Right ventricle myocardium inferior (tissue), 1 donor: ENCODE measurements at regions of chr2 and their contacts with region 1.

Region 1: GRCh38 chr2:85750587-85751575 is 2.9 kb upstream of the ATOH8 start:
- DNase-seq: no peak
- ATAC-seq: peak; percentile 59

Region 2: GRCh38 chr2:85772019-85772745 is 21.3 kb after region 1 on chr2:
- intact Hi-C with region 1: loop called (anchors 2 kb)
- DNase-seq: peak; percentile 98
- ATAC-seq: peak; percentile 92

Region 3: DNA sequence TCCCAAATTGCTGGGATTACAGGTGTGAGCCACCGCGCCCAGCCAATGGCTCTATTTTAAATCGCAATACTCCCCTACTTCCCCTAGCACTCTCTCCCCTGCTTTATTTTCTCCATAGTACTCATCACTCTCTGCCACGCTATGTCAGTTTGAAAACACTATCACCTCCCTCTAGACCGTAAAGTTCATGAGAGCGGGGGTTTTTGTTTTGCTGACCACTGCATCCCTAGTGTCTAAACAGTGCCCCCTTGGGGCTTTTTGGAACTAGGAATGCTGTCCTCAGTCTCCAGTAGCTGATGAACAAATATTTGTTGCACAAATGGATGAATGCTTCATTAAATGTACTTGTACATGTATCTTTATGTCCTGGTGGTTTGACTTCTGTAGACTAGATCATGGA is 47.0 kb after region 1 on chr2:
- intact Hi-C with region 1: loop called (anchors 1 kb)
- DNase-seq: no peak
- ATAC-seq: peak; percentile 34

Region 4: GRCh38 chr2:85873679-85874078 is 122.8 kb after region 1 on chr2:
- intact Hi-C with region 1: no loop called
- DNase-seq: no peak
- ATAC-seq: no peak